Heart right ventricle (tissue), 16 donors: ENCODE measurements at regions of chr7 and their contacts with region 1.

Region 1: GRCh38 chr7:86181474-86181873 is 462.2 kb upstream of the GRM3 start:
- DNase-seq: no peak
- ATAC-seq: no peak
- H3K4me3 ChIP-seq: no peak overlapping the region
- H3K27ac ChIP-seq: no peak overlapping the region
- H3K4me1 ChIP-seq: no peaks in the 10 kb centered on the region
- H3K27me3 ChIP-seq: no peaks in the 10 kb centered on the region
- CTCF ChIP-seq: no peak

Region 2: DNA sequence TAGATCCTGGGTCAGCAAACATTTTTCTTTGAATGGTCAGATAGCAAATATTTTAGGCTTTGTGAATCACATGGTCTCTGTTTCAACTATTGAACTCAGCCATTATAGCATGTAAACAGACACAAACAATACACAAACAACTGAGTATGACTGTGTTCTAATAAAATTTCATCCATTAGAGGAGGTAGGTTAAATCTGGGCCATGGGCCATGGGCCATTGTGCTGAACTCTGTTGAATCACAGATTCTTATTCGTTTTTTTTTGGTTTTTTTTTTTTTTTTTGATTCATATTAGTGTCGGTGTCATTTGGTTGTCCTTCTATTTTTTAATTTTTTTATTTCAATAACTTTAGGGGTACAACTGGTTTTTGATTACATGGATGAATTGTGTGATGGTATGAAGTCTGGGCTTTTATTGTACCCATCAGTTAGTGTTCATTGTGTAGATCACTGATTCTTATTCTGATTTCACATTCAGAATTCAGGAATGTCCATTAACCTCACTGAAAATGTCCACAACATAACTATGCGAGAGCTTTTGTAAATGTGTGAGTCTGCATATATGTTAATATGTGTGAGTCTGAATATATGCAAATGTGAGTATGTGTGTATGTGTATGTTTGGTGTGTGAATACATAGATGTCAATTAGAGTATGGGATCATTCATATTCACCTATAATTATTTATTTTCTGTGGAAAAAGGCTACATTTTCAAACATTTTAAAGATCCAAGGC is 18.6 kb after region 1 on chr7:
- intact Hi-C with region 1: loop called in 1 of 10 experiments (anchors 1 kb)
- DNase-seq: no peak
- ATAC-seq: no peak
- H3K4me3 ChIP-seq: no peak overlapping the region
- H3K27ac ChIP-seq: no peak overlapping the region
- H3K4me1 ChIP-seq: no peaks in the 10 kb centered on the region
- H3K27me3 ChIP-seq: no peaks in the 10 kb centered on the region
- CTCF ChIP-seq: no peak